MCF 10A (cell line): ENCODE measurements at regions of chr1 and their contacts with region 1.

Region 1: GRCh38 chr1:216410026-216410425 is 13.2 kb downstream of the USH2A start:
- DNase-seq: no peak
- H3K4me3 Mint-ChIP-seq: no peak overlapping the region
- H3K27ac Mint-ChIP-seq: no peak overlapping the region
- H3K4me1 Mint-ChIP-seq: no peaks in the 10 kb centered on the region
- H3K27me3 Mint-ChIP-seq: peaks cover 81% of the 10 kb centered on the region
- CTCF ChIP-seq: no peak

Region 2: GRCh38 chr1:216476341-216476740 is 66.3 kb after region 1 on chr1:
- CTCF ChIA-PET with region 1: no interaction called
- POLR2A ChIA-PET with region 1: no interaction called
- intact Hi-C with region 1: loop called (anchors 5 kb)
- DNase-seq: no peak
- H3K4me3 Mint-ChIP-seq: no peak overlapping the region
- H3K27ac Mint-ChIP-seq: no peak overlapping the region
- H3K4me1 Mint-ChIP-seq: no peaks in the 10 kb centered on the region
- H3K27me3 Mint-ChIP-seq: peaks cover 74% of the 10 kb centered on the region
- CTCF ChIP-seq: no peak